MCF 10A (cell line): ENCODE measurements at regions of chr6 and their contacts with region 1.

Region 1: GRCh38 chr6:36793913-36794712 is 45.1 kb downstream of the CPNE5 start:
- DNase-seq: no peak
- H3K4me3 Mint-ChIP-seq: no peak overlapping the region
- H3K27ac Mint-ChIP-seq: no peak overlapping the region
- H3K4me1 Mint-ChIP-seq: no peaks in the 10 kb centered on the region
- H3K27me3 Mint-ChIP-seq: peaks cover 23% of the 10 kb centered on the region
- CTCF ChIP-seq: no peak

Region 2: GRCh38 chr6:36752886-36753506 is 41.1 kb before region 1 on chr6:
- CTCF ChIA-PET with region 1: no interaction called
- POLR2A ChIA-PET with region 1: no interaction called
- intact Hi-C with region 1: no loop called
- DNase-seq: no peak
- H3K4me3 Mint-ChIP-seq: no peak overlapping the region
- H3K27ac Mint-ChIP-seq: no peak overlapping the region
- H3K4me1 Mint-ChIP-seq: peaks cover 6% of the 10 kb centered on the region
- H3K27me3 Mint-ChIP-seq: no peaks in the 10 kb centered on the region
- CTCF ChIP-seq: no peak

Region 3: DNA sequence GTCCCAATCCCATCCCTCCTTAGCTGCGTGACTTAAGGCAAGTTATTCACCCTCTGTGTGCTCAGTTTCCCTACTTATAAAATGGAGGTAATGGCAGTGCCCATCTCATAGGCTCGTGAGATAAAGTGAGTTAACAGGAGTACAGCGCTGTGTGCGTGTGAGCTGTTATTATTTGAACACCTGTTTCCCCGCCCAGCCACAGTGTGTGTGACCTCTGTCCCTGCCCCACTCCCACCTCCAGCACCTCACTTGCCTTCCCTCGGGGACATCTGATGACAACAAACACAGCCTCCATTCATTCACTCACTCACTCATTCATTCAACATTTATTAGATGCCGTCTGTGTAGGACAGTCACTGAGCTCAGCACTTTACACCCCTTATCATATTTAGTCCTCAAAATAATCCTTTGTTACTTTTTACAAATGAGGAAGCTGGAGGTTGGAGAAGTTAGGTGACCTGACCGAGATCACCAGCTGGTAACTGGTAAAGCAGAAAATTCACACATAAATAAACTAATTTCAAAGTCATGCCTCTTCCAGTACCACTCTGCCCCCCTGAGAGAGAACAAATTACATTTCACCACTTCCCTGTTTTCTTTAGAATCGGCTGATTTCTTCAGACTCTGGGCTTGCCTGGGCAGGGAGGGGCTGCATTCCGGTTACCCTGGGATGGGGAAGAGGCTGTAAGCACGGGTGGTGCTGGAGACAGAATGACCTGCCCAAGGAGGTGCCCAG is 13.5 kb before region 1 on chr6:
- CTCF ChIA-PET with region 1: interaction called, 14 read pairs
- POLR2A ChIA-PET with region 1: no interaction called
- intact Hi-C with region 1: no loop called
- DNase-seq: no peak
- H3K4me3 Mint-ChIP-seq: no peak overlapping the region
- H3K27ac Mint-ChIP-seq: no peak overlapping the region
- H3K4me1 Mint-ChIP-seq: no peaks in the 10 kb centered on the region
- H3K27me3 Mint-ChIP-seq: peaks cover 22% of the 10 kb centered on the region
- CTCF ChIP-seq: no peak

Region 4: DNA sequence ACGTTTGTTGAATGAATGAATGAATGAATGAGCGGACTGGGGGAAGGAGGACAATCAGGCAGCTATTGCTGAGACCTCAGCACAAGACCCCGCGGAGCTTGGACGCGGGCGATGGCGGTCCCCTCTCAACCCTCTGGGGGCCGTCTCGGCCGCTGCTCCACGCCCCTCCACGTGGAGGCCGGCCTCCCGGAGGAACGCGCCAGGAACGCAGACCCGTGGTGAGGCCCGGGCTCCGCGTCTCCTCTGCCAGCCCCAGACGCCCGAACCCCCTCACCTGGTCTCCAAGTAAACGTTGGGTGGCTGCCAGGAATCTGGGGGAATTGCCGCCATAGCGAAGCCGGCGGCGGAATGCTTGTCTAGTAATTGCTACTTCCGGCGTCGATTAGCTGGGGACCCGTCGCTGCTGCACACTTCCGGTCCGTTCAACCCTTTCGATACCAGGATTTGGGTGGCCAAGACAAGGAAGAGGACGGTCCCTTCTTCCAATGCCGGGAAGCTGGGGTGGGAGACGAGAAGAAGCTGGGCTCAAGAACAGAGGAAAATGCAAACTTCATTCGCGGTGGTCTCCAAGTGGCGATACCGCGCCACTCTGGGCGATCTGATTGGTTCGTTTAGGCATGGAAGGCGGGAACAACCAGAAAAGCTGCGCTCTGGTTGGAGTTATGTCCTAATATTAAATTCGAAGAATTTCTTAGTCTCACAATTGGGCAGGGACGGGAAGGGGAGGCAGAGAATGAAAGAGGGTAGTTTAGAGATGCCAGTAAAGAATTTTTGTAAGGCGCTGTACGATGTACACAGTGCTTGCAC is 80.5 kb after region 1 on chr6 and contains the start of gene PPIL1:
- CTCF ChIA-PET with region 1: no interaction called
- POLR2A ChIA-PET with region 1: no interaction called
- intact Hi-C with region 1: no loop called
- DNase-seq: peak; percentile 90
- H3K4me3 Mint-ChIP-seq: peak within 1 kb of the TSS; percentile 88
- H3K27ac Mint-ChIP-seq: peak within 1 kb of the TSS; percentile 95
- H3K4me1 Mint-ChIP-seq: peaks cover 14% of the 10 kb centered on the region
- H3K27me3 Mint-ChIP-seq: no peaks in the 10 kb centered on the region
- CTCF ChIP-seq: no peak
- total RNA-seq, gene PPIL1: 53.6 and 54.9 TPM in 2 replicates